Astrocyte of the cerebellum (primary cell): ENCODE measurements at regions of chr10 and their contacts with region 1.

Region 1: DNA sequence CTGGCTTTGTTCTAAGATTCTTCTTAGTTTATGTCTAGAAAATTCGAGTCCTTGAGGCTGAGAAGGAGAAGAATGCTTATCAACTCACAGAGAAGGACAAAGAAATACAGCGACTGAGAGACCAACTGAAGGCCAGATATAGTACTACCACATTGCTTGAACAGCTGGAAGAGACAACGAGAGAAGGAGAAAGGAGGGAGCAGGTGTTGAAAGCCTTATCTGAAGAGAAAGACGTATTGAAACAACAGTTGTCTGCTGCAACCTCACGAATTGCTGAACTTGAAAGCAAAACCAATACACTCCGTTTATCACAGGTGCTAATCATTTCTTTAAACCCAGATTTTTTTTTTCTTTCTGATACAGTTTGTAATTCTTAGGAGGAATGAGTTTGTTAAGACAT is 6.7 kb downstream of the CEP55 start:
- DNase-seq: no peak
- H3K4me3 ChIP-seq: no peak overlapping the region
- CTCF ChIP-seq: no peak

Region 2: GRCh38 chr10:92880233-92880861 is 622.7 kb before region 1 on chr10:
- in situ Hi-C with region 1: loop called (anchors 25 kb)
- DNase-seq: peak; percentile 37
- H3K4me3 ChIP-seq: no peak overlapping the region
- CTCF ChIP-seq: peak; percentile 49

Region 3: DNA sequence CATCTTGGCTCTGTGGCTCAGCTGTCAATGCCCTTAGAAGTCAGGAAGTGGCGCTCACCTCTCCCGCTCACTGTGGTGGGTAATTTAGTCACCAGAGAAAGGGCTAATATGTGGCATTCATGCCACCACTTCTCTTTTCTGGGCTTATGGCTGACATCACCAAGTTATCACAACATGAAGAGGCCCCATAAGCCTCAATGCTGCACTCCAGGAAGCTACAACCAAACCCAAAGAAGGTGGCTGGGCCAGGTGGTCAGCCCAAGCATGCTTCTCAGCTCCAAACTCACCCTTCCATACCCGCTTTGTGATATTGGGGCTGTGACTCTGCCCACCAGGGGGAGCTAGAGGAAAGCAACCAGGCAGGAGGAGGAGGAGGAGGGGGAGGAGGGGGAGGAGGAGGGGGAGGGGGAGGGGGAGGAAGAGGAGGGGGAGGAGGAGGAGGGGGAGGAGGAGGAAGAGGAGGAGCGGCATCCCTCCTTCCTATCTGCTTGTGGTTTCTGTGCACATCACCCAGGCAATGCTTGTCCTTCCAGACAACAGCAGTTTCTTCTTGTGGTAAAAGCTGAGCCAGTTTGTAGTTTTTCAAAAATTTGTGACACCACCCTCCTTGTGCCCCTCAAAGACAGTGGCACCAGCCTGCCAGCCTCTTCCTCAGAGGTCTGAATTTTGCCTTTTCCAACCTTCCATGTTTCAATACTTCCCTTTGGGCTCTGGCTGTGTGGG is 387.3 kb before region 1 on chr10:
- in situ Hi-C with region 1: loop called (anchors 25 kb)
- DNase-seq: peak; percentile 12
- H3K4me3 ChIP-seq: no peak overlapping the region
- CTCF ChIP-seq: peak; percentile 62